SK-N-SH (cell line): ENCODE measurements at regions of chr1 and their contacts with region 1.

Region 1: DNA sequence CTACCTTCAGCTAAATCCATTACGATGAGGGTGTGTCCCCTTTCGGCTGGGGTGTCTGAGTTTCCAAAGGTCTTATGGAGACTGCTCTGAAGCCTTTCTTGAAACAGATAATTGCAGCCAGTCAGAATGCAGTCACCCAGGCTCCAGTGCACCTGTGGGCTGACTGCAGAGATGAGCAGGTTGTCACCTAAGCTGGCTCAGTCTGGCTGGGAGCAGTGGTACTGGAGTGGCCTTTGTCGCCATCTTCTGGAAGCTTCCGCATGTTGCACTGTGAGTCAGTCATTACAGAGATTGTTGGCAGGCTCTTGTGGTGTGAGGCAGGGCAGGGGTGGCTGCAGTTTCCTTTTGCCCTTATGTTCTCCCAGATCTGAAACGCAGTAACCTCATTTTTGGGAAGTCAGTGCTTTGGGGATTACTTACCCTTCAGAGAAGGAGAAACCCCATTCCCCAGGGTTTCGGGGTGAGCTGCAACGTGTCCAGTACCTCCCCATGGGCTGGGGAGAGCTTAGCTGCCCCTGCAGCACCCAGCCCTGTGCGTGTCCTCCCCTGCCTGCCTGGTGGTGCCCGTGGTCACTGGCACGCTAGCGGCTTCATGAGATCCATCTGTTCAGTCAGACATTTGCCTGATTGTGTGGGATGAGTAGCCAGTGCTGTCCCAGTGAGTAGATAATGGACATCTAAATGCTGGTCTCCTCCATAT is 48.0 kb downstream of the SMYD2 start:
- DNase-seq: peak; percentile 78
- H3K4me3 ChIP-seq: no peak overlapping the region; a peak in 1 of 4 replicates
- H3K27ac ChIP-seq: no peak overlapping the region
- H3K4me1 ChIP-seq: peaks cover 0 to 7% of the 10 kb centered on the region in 2 experiments; a peak in 1 of 4 replicates
- H3K27me3 ChIP-seq: no peaks in the 10 kb centered on the region
- CTCF ChIP-seq: peak; percentile 92
- EP300 ChIP-seq: no peak
- RAD21 ChIP-seq: peak; percentile 97

Region 2: DNA sequence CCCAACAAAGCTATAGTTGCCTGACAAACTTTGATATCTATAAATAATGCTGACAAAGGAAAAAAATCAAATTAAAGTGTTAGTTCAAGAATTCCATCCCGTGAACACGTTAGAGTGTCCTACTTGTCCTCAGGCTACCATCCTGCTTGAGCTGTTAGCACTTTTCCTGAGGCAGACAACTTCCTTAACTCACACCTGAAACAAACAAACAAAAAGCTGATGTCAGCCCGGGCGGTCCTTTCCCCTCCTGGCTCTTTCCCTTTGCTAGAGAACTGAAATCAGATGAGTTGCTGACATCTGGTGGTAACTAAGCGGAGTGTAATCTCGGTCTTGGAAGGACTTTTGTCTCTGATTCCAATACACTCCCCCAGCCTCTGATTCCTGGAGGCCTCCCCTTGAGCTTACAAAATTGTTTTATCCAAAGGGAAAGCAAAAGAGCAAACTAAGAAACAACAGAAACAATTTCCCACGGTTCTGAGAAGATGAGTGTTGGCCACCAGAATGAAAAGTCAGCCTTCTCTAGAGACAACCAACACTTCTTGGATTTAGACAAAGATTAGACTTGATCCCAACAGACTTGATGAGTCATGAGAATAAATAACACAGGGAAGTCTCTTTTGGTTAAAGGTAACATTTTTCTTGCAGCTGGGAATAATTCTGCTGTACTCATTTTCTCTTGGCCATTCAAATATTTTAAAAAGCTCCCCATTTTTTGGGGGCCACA is 205.7 kb before region 1 on chr1:
- CTCF ChIA-PET with region 1: interaction called, 20 read pairs
- POLR2A ChIA-PET with region 1: no interaction called
- DNase-seq: peak; percentile 76
- H3K4me3 ChIP-seq: peak overlapping the region in 1 of 2 experiments; percentile 49; a peak in 1 of 4 replicates
- H3K27ac ChIP-seq: peak overlapping the region in 1 of 2 experiments; percentile 39; a peak in 2 of 4 replicates
- H3K4me1 ChIP-seq: peaks cover 0 to 10% of the 10 kb centered on the region in 2 experiments; a peak in 2 of 4 replicates
- H3K27me3 ChIP-seq: no peaks in the 10 kb centered on the region
- CTCF ChIP-seq: peak; percentile 62
- EP300 ChIP-seq: no peak
- RAD21 ChIP-seq: peak; percentile 98

Region 3: DNA sequence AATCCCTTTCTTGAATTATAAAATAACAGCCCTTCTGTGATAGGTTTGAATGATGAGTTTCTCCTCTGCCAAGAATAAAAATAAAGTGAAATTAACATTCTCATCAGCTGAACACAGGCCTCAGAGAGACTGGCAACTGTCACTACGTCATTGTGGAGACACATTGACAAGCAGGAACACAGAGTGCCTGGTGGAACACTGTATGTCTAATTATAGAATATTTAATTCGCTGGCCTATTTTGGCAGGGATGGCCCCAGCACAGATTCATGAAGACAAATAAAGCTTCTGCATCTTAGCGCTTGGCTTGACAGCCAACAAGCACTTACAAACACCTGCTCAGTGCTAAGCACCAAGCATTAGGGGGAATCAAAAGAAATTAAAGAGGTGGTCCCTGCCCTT is 99.9 kb before region 1 on chr1:
- CTCF ChIA-PET with region 1: interaction called, 12 read pairs
- POLR2A ChIA-PET with region 1: no interaction called
- DNase-seq: no peak
- H3K4me3 ChIP-seq: no peak overlapping the region
- H3K27ac ChIP-seq: no peak overlapping the region
- H3K4me1 ChIP-seq: peaks cover 0 to 2% of the 10 kb centered on the region in 2 experiments; a peak in 1 of 4 replicates
- H3K27me3 ChIP-seq: no peaks in the 10 kb centered on the region; the same call in 1 of the 2 replicates
- CTCF ChIP-seq: no peak
- EP300 ChIP-seq: no peak
- RAD21 ChIP-seq: no peak

Region 4: DNA sequence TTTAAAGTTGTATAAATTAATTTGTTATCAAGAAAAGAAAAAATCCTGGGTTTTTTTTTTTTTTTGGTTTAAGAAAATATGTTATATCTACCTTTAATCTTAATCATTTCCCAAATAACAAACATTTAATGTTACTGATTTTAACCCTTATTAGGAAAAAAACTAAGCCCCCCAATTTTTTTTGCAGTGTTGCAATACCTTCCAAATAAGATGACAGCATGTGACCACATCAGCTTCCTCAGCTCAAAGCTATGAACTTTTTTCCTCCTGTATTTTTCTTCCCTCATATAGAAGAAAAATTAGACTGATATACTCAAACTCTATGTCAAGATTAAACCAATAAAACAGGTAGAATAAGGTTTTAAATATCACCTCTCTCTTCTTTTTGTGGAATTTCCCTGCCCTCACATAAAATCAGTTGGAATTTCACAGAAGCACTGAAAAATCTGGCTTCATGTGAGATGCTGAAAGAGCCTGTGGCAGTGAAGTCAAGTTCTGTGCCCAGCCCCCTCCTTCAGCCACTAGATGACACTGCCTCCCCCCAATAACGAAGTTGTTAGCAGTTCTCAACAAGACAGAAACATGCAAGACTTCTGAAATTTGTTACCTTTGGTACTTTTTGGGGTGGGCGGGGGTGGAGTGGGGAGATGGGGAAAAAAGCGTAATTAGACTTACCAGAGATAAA is 57.6 kb before region 1 on chr1:
- CTCF ChIA-PET with region 1: interaction called, 27 read pairs
- POLR2A ChIA-PET with region 1: no interaction called
- DNase-seq: peak; percentile 25
- H3K4me3 ChIP-seq: no peak overlapping the region
- H3K27ac ChIP-seq: no peak overlapping the region
- H3K4me1 ChIP-seq: peaks cover 0 to 10% of the 10 kb centered on the region in 2 experiments; a peak in 2 of 4 replicates
- H3K27me3 ChIP-seq: no peaks in the 10 kb centered on the region
- CTCF ChIP-seq: no peak
- EP300 ChIP-seq: no peak
- RAD21 ChIP-seq: peak; percentile 39; the same call in 1 of the 2 replicates

Region 5: DNA sequence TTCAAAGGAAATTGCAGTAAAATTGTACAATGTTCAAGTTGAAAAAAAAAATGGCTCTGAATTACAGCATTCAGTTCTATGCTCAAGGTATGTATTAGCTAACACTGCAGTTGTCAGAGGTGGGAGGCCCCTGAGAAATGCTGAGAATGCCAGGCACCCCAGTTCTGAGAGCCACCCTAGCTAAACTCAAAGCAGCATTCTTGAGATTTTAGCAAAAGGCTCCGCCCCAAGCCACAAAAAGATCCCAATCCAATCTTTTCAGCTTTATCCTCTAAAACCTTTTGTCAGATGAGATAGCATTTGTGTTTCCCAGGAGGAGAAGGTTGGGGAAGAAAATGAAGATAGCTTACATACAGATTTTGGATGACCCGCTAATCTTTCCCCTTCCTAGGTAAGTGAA is 20.9 kb after region 1 on chr1:
- CTCF ChIA-PET with region 1: interaction called, 59 read pairs
- POLR2A ChIA-PET with region 1: no interaction called
- DNase-seq: no peak
- H3K4me3 ChIP-seq: no peak overlapping the region
- H3K27ac ChIP-seq: peak overlapping the region in 1 of 2 experiments; percentile 67; a peak in 1 of 4 replicates
- H3K4me1 ChIP-seq: peaks cover 2 to 15% of the 10 kb centered on the region in 2 experiments; a peak in 2 of 4 replicates
- H3K27me3 ChIP-seq: no peaks in the 10 kb centered on the region
- CTCF ChIP-seq: no peak
- EP300 ChIP-seq: no peak
- RAD21 ChIP-seq: no peak

Region 6: DNA sequence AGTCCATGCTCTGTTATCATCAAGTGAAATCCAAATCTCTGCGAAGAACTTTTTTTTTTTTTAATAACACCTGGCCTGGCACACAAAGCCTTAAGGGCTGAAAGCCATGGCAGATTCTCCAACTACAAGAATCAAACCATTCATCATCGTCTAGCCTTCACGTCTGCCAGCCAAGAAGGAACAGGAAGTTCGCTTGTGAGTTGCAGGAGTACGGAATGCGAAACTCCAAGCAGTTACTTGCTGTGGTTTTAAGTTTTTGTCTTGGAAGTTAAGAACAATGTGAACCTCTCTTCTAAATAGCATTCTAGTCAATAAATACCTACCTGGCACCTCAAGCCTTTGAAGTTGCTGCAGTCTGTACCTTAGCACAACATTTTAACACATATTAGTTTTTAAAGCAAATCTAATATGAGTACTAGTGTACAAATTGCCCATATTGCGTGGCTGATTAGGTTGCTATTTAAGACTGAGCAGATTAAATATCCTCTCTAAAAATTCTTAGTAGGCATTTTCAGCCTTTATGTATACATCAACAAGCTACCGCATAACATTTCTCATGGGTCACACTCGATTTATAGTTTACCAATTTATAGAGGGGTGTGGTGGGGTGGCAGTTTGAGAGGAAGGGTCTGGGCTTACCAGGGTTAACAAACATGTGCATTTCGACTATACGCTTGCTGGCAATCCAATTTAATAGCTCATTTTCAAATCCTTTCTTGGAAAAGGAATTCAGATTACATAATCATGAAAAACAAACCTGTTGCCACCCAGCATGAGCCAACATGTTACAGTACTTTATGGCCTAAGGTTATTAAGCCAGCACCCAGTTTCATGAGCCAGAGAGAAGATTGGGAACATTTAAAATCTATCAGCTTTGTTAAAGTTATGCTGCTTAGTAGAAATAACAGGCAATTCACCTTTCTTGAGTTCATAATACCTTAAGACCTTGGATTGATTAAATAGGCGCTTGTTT is 244.8 kb after region 1 on chr1:
- CTCF ChIA-PET with region 1: interaction called, 323 read pairs
- POLR2A ChIA-PET with region 1: no interaction called
- DNase-seq: no peak
- H3K4me3 ChIP-seq: no peak overlapping the region
- H3K27ac ChIP-seq: no peak overlapping the region
- H3K4me1 ChIP-seq: peaks cover 0 to 9% of the 10 kb centered on the region in 2 experiments; a peak in 2 of 4 replicates
- H3K27me3 ChIP-seq: no peaks in the 10 kb centered on the region
- CTCF ChIP-seq: no peak
- EP300 ChIP-seq: no peak
- RAD21 ChIP-seq: no peak

Region 7: DNA sequence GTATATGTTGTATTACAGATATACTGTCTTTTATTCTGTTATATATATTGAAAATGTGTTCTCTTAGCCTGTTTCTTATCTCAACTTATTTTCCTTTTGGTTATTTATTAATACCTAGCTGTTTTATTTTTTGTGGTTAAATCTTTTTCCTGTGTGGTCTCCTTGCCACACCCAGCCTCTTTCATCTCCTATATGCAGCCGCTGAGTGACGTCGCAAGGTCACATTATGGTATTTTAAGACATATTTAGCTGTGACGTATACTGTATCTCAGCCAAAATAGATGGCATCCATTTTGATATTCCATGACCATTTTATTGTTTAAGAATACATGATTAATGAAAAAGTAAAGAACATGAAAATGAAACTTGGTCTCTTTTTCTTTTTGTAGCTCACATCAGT is 303.2 kb after region 1 on chr1:
- CTCF ChIA-PET with region 1: interaction called, 44 read pairs
- POLR2A ChIA-PET with region 1: no interaction called
- DNase-seq: no peak
- H3K4me3 ChIP-seq: no peak overlapping the region
- H3K27ac ChIP-seq: no peak overlapping the region
- H3K4me1 ChIP-seq: peaks cover 0 to 5% of the 10 kb centered on the region in 2 experiments; a peak in 2 of 4 replicates
- H3K27me3 ChIP-seq: no peaks in the 10 kb centered on the region
- CTCF ChIP-seq: no peak
- EP300 ChIP-seq: no peak
- RAD21 ChIP-seq: no peak